ENCODE measurements at regions of chr5 and their contacts with region 1.

Region 1: GRCh38 chr5:67209142-67209771 is 12.7 kb upstream of the CD180 start:
- DNase-seq: peak; percentile 33 to 77 (median 69)
- ATAC-seq: peak; percentile 74
- H3K4me3 ChIP-seq: peak overlapping the region; percentile 14
- H3K4me3 Mint-ChIP-seq: peak overlapping the region in 5 of 10 donors; percentile 47 to 55 (median 50)
- H3K27ac ChIP-seq: peak overlapping the region; percentile 0
- H3K27ac Mint-ChIP-seq: peak overlapping the region; percentile 78 to 98 (median 85)
- H3K4me1 ChIP-seq: peaks cover 50 to 54% of the 10 kb centered on the region in 2 donors
- H3K4me1 Mint-ChIP-seq: peaks cover 39 to 71% (median 66%) of the 10 kb centered on the region in 7 donors
- H3K27me3 ChIP-seq: no peaks in the 10 kb centered on the region
- H3K27me3 Mint-ChIP-seq: peaks cover 0 to 2% (median 0%) of the 10 kb centered on the region in 5 donors

Region 2: DNA sequence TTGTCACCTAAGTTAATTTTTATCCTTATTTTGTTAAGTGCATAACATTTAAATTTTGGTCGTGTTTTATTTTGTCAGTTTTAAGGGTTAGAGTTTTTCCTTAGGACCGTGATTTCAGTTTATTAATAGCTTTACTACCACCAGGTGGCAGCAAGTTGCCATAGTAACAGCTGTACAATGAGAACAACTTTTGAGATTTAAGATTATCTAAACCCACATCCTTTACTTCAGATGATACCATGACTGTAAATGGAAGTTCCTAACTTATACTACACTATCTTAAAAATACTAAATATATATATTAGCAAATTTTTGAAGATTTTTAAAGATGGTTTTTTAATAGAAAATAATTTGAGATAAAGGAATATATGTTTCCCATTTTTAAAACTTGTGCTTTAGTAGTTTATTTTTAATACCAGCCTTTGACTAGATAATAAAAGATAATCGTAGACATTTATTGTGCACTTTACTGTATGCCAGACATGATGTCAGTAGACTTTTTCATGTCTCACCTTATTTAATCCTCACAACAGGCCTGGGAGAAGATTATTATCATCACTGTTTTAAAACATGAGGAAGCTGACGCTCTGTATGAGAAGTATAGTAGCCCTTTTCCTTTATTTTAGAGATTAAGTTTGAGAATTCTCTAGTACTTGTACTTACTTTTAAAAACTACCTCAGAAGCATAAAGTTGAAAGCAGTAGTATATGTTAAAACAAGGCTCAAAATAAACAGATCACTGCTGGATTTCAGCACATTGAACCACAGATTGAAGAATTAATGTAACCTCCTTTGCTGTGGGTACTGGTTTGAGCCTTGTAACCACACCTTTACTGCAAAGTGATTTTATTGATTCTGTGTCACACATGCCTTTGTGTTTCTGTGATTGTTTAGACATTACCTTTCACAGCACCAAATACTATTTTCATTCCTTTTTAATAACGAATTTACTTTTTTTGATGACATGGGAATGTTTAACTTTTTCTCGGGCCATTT is 1037.6 kb before region 1 on chr5:
- CTCF ChIA-PET with region 1: no interaction called
- POLR2A ChIA-PET with region 1: no interaction called
- intact Hi-C with region 1: loop called in 1 of 2 experiments (anchors 5 kb)
- DNase-seq: peak in 7 of 9 donors; percentile 69 to 85 (median 80)
- ATAC-seq: peak; percentile 89
- H3K4me3 ChIP-seq: no peak overlapping the region
- H3K4me3 Mint-ChIP-seq: peak overlapping the region in 6 of 10 donors; percentile 5 to 48 (median 38)
- H3K27ac ChIP-seq: peak overlapping the region; percentile 43
- H3K27ac Mint-ChIP-seq: peak overlapping the region; percentile 69 to 93 (median 90)
- H3K4me1 ChIP-seq: peaks cover 7 to 8% of the 10 kb centered on the region in 2 donors
- H3K4me1 Mint-ChIP-seq: peaks cover 9 to 39% (median 28%) of the 10 kb centered on the region in 7 donors
- H3K27me3 ChIP-seq: no peaks in the 10 kb centered on the region
- H3K27me3 Mint-ChIP-seq: no peaks in the 10 kb centered on the region

Region 3: DNA sequence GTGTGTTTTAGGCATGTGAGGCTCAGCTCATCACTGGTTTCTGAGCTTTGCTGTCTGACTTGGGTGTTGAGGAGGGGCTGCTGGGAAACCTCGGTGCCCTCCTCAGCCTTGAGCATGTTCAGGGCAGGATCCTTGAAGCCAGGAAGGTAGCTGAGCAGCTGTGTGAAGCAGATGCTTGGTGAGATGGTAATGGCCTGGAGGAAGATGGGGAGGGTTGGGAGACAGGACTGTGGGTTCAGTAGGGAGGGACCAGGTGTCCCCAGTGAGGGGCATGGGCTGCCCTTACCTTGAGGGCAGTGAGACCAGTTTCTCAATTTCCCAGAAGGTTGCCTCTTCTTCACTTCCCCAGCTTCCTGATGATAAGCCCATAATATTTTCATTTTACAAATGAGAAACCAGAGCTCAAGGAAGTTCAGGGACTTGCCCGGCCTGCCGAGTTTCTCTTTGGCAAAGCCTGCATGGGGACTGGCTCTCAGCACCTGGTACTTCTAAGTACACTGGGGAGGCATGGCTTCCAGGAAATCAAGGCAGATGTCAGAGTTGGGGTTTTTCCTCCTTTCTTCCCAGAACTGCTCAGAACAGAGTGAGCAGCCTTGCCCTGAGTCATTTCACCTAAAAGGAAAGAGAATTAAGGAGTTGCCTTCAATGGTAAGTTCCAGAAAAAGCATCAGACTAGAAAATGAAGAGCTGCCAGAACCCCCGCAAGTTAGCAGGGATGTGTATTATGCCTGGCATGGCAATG is 387.4 kb before region 1 on chr5:
- CTCF ChIA-PET with region 1: interaction called, 5 read pairs
- POLR2A ChIA-PET with region 1: no interaction called
- intact Hi-C with region 1: loop called in 1 of 2 experiments (anchors 1 kb)
- DNase-seq: peak in 2 of 9 donors; percentile 2 to 53
- ATAC-seq: peak; percentile 36
- H3K4me3 ChIP-seq: no peak overlapping the region
- H3K4me3 Mint-ChIP-seq: peak overlapping the region in 3 of 10 donors; percentile 30 to 85 (median 32)
- H3K27ac ChIP-seq: no peak overlapping the region
- H3K27ac Mint-ChIP-seq: peak overlapping the region in 6 of 9 donors; percentile 11 to 97 (median 54)
- H3K4me1 ChIP-seq: peaks cover 0 to 12% of the 10 kb centered on the region in 2 donors
- H3K4me1 Mint-ChIP-seq: peaks cover 0 to 56% (median 12%) of the 10 kb centered on the region in 7 donors
- H3K27me3 ChIP-seq: no peaks in the 10 kb centered on the region
- H3K27me3 Mint-ChIP-seq: no peaks in the 10 kb centered on the region

Region 4: GRCh38 chr5:67165526-67166459 is 43.5 kb before region 1 on chr5:
- CTCF ChIA-PET with region 1: interaction called, 370 read pairs
- POLR2A ChIA-PET with region 1: interaction called, 348 read pairs
- intact Hi-C with region 1: loop called (anchors 1 kb)
- DNase-seq: peak; percentile 56 to 78 (median 70)
- ATAC-seq: peak; percentile 88
- H3K4me3 ChIP-seq: peak overlapping the region; percentile 54
- H3K4me3 Mint-ChIP-seq: peak overlapping the region; percentile 84 to 96 (median 88)
- H3K27ac ChIP-seq: peak overlapping the region; percentile 80
- H3K27ac Mint-ChIP-seq: peak overlapping the region in 8 of 9 donors; percentile 96 to 100 (median 98)
- H3K4me1 ChIP-seq: peaks cover 71 to 73% of the 10 kb centered on the region in 2 donors
- H3K4me1 Mint-ChIP-seq: peaks cover 36 to 83% (median 62%) of the 10 kb centered on the region in 7 donors
- H3K27me3 ChIP-seq: no peaks in the 10 kb centered on the region
- H3K27me3 Mint-ChIP-seq: no peaks in the 10 kb centered on the region

Region 5: DNA sequence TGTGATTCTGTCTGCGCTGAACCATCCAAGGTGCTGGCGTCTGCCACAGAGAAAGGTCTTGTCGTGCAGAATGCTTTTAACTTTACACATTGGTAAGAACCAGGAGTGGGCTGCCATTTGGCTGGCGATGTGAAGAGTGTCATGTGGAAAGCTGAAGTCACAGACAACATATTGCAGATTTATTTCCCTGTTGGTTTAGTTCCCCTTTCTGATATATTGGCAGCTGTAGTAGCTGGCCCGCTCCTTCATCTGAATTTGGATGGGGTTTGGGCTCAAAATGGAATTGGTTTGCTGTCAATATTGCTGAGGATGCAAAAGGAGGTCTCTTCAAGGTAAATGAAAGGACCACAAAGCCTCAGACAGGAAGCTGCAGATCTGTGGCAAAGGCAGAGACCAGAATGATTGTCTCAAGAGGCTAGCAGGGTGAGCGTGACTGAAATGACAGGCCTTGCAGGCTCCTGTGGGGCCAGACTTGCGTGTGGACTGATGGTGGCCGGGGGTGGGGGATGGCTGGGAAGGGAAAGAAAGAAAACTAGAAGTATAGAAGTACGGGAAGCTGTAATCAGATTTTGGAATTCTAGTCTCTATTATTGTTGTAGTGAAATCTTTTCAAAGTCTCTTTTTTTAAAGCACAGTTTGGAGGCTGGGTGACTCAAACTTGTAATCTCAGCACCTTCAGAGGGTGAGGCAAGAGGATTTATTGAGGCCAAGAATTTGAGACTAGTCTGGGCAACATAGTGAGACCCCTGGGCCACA is 12.4 kb after region 1 on chr5:
- CTCF ChIA-PET with region 1: interaction called, 10 read pairs
- POLR2A ChIA-PET with region 1: interaction called, 8 read pairs
- intact Hi-C with region 1: loop called (anchors 1 to 2 kb)
- DNase-seq: peak in 6 of 9 donors; percentile 33 to 48 (median 40)
- ATAC-seq: peak; percentile 85
- H3K4me3 ChIP-seq: peak overlapping the region; percentile 33
- H3K4me3 Mint-ChIP-seq: peak overlapping the region; percentile 63 to 80 (median 71)
- H3K27ac ChIP-seq: peak overlapping the region; percentile 24
- H3K27ac Mint-ChIP-seq: peak overlapping the region; percentile 61 to 99 (median 91)
- H3K4me1 ChIP-seq: peaks cover 44 to 47% of the 10 kb centered on the region in 2 donors
- H3K4me1 Mint-ChIP-seq: peaks cover 42 to 74% (median 66%) of the 10 kb centered on the region in 7 donors
- H3K27me3 ChIP-seq: no peaks in the 10 kb centered on the region
- H3K27me3 Mint-ChIP-seq: peaks cover 0 to 4% (median 0%) of the 10 kb centered on the region in 5 donors

Region 6: DNA sequence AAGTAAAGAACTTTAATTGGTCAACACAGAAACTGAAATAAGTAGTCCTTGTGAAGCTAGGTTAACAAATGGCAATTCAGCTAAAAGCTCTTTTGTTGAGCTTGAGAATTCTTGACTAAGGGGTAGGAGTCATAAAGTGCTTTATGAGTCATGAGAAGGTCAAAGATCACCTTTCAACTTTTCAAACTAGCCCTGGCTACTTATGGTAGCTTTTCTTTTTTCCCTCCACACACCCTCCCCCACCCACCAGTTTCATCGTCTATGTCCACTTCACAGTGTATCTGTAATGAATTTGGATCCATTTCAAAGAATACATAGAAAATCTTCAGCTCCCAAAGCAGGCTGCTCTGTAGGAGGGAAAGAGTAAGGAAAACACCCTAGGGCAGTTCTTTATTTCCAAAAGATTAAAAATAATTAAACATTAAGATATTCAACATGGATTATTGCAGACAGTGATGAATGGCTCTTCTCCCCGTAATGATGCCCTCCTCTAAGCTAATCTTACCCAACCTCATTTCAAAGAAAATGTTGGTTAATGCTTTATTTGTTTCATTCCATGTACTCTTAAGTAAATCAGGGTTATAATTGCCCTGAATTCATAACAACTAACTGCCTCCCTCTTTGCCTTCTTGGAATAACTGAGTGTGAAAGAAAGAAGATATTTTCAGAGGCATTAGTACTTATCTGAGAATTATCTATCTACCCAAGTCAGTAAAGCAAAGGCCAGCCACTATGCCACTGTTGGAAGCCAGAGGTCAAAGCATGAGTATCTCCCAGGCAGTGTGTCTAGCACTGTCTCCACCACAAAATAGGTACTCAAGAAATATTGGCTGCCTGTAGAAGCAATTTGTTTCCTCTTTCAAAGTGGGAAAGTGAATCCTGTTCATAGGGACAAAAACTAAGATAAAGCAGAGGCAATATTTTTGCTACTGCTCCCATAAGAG is 1296.9 kb after region 1 on chr5:
- CTCF ChIA-PET with region 1: no interaction called
- POLR2A ChIA-PET with region 1: no interaction called
- intact Hi-C with region 1: no loop called
- DNase-seq: no peak
- ATAC-seq: no peak
- H3K4me3 ChIP-seq: no peak overlapping the region
- H3K4me3 Mint-ChIP-seq: no peak overlapping the region
- H3K27ac ChIP-seq: no peak overlapping the region
- H3K27ac Mint-ChIP-seq: no peak overlapping the region
- H3K4me1 ChIP-seq: no peaks in the 10 kb centered on the region
- H3K4me1 Mint-ChIP-seq: no peaks in the 10 kb centered on the region
- H3K27me3 ChIP-seq: no peaks in the 10 kb centered on the region
- H3K27me3 Mint-ChIP-seq: peaks cover 0 to 6% (median 3%) of the 10 kb centered on the region in 5 donors

Measured in naive thymus-derived CD4-positive, alpha-beta T cell (primary cell).